ENCODE measurements at regions of chr1 and their contacts with region 1.

Region 1: DNA sequence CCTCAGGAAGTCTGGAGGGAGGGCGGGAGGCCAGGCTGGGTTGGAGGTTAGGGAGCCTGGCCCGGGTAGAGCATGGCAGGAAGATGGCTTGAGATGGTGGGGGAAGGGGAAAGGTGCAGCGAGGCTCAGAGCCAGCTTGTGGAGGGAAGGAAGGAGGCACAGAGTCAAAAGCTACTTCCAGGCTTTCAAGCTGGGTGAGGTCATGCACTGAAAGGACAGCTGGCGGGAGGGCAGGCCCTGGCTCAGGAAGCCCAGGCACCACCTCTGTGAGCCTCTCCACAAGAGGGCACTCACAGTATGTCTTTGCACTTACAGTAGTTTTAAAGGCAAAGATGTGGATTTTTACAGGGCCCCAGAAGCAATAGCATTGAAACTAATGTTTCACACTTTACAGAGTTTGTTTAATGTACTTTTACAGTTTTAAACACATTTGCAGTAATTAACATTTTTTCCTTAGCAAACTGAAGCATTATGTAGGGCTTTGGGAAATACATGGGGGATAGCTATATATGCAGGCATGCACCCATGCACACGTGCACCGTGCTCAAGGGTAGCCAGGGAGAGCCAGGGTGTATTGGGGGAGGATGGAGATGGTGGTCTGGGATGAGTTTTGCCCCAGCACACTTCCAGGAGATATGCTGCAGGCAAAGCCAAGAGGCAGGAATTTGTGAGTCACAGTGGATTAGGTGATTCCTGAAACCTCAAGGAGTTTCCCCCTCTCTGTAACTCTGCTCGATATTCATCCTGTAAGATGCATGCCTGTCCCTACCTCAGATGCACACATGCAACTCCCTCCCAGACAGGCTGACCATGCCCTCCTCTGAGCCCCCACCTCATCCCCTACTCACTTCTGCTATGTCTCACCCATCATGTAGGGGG is 6.1 kb upstream of the ADAM15 start:
- DNase-seq: peak in 8 of 9 experiments; percentile 42 to 80 (median 64)
- ATAC-seq: peak; percentile 94
- H3K4me3 ChIP-seq: no peak overlapping the region
- H3K4me3 Mint-ChIP-seq: no peak overlapping the region
- H3K27ac ChIP-seq: no peak overlapping the region
- H3K27ac Mint-ChIP-seq: no peak overlapping the region
- H3K4me1 ChIP-seq: no peaks in the 10 kb centered on the region
- H3K4me1 Mint-ChIP-seq: peaks cover 4% of the 10 kb centered on the region
- H3K27me3 ChIP-seq: no peaks in the 10 kb centered on the region
- H3K27me3 Mint-ChIP-seq: peaks cover 3% of the 10 kb centered on the region
- CTCF ChIP-seq: peak; percentile 64

Region 2: DNA sequence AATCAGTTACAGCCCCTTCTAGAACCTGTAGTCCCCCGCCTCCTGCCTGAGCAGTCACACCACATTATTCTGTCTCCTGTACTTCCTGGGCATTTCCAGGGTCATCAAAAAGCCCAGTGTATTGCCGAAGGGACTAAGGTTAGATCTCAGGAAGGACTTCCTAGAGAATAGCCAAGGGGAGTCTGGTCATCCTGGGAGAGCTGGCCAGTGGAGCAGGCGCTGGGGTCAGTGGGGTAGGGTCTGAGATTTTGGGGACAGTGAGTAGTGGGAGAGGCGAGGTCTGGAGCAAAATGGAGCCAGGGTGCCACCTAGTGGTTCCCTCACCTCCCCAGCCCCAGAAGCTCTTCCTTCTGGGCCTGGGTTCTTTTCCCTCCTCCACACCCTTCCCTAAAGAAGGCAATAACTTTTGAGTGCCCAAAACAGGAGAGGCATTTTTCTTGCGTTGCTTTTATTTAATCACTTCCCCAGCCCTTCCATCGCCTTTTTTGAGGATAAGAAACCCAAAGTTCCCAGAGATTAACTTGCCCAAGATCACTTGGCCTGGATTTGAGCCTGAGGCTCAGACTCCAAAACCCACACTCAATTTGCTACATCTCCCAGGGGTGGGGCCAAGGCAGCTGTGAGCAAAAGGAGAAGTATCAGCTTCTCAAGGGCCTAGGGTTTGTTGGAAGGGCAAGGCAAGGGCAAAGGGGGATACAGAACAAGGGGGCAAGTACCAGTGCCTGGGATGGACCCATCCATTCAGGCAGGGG is 101.2 kb before region 1 on chr1:
- CTCF ChIA-PET with region 1: no interaction called
- POLR2A ChIA-PET with region 1: no interaction called
- intact Hi-C with region 1: no loop called
- DNase-seq: peak in 4 of 9 experiments; percentile 40 to 67 (median 54)
- ATAC-seq: peak; percentile 29
- H3K4me3 ChIP-seq: no peak overlapping the region
- H3K4me3 Mint-ChIP-seq: no peak overlapping the region
- H3K27ac ChIP-seq: peak overlapping the region in 1 of 2 experiments; percentile 68
- H3K27ac Mint-ChIP-seq: peak overlapping the region; percentile 85
- H3K4me1 ChIP-seq: peaks cover 35% of the 10 kb centered on the region
- H3K4me1 Mint-ChIP-seq: peaks cover 51% of the 10 kb centered on the region
- H3K27me3 ChIP-seq: no peaks in the 10 kb centered on the region
- H3K27me3 Mint-ChIP-seq: no peaks in the 10 kb centered on the region
- CTCF ChIP-seq: peak; percentile 61

Region 3: DNA sequence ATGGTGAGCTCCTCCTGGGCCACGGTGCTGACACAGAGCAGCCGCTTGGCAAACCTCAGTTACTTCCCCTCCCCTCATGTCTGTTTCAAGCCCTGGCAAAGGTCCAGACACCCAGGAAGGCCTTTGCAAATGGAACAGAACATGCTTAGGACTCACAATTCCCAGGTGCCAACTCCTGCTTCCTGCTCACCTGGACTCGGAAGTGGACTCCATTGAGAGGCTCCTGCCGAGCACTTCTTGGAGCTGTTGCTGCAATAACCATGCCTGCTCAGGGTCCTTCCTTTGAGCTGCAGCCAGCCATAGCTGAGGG is 22.2 kb before region 1 on chr1:
- CTCF ChIA-PET with region 1: interaction called, 14 read pairs
- POLR2A ChIA-PET with region 1: no interaction called
- intact Hi-C with region 1: no loop called
- DNase-seq: no peak
- ATAC-seq: no peak
- H3K4me3 ChIP-seq: no peak overlapping the region
- H3K4me3 Mint-ChIP-seq: no peak overlapping the region
- H3K27ac ChIP-seq: no peak overlapping the region
- H3K27ac Mint-ChIP-seq: no peak overlapping the region
- H3K4me1 ChIP-seq: peaks cover 4% of the 10 kb centered on the region
- H3K4me1 Mint-ChIP-seq: peaks cover 2% of the 10 kb centered on the region
- H3K27me3 ChIP-seq: no peaks in the 10 kb centered on the region
- H3K27me3 Mint-ChIP-seq: peaks cover 2% of the 10 kb centered on the region
- CTCF ChIP-seq: no peak

Region 4: GRCh38 chr1:155078469-155079209 is 33.6 kb after region 1 on chr1 and contains the start of gene EFNA3:
- CTCF ChIA-PET with region 1: interaction called, 61 read pairs
- POLR2A ChIA-PET with region 1: no interaction called
- intact Hi-C with region 1: no loop called
- DNase-seq: peak in 8 of 9 experiments; percentile 41 to 76 (median 64)
- ATAC-seq: peak; percentile 43
- H3K4me3 ChIP-seq: peak within 1 kb of the TSS; percentile 29 to 37
- H3K4me3 Mint-ChIP-seq: peak within 1 kb of the TSS; percentile 69
- H3K27ac ChIP-seq: no peak within 1 kb of the TSS
- H3K27ac Mint-ChIP-seq: peak within 1 kb of the TSS; percentile 5
- H3K4me1 ChIP-seq: peaks cover 52% of the 10 kb centered on the region
- H3K4me1 Mint-ChIP-seq: peaks cover 36% of the 10 kb centered on the region
- H3K27me3 ChIP-seq: peaks cover 39 to 46% of the 10 kb centered on the region in 2 experiments
- H3K27me3 Mint-ChIP-seq: peaks cover 26% of the 10 kb centered on the region
- CTCF ChIP-seq: no peak
- total RNA-seq, gene EFNA3: 0.46 to 0.69 TPM

Region 5: DNA sequence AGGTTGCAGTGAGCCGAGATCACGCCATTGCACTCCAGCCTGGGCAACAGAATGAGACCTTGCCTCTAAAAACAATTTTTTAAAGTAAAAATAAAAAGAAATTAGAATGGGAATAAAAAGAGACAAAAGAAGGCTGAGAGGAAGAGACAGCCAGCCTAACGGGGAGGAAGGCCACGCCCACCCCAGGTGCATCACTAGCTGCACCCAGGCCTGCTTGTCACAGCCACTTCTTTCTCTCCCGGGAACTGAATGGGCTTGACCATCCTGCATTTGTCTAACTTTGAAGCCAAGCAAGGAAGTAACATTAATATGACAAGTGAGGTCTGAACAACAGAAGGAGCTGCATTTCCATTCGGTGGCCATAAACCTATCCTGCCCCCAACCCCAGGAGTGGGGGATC is 61.8 kb after region 1 on chr1:
- CTCF ChIA-PET with region 1: no interaction called
- POLR2A ChIA-PET with region 1: no interaction called
- intact Hi-C with region 1: no loop called
- DNase-seq: no peak
- ATAC-seq: no peak
- H3K4me3 ChIP-seq: no peak overlapping the region
- H3K4me3 Mint-ChIP-seq: no peak overlapping the region
- H3K27ac ChIP-seq: no peak overlapping the region
- H3K27ac Mint-ChIP-seq: no peak overlapping the region
- H3K4me1 ChIP-seq: no peaks in the 10 kb centered on the region
- H3K4me1 Mint-ChIP-seq: no peaks in the 10 kb centered on the region
- H3K27me3 ChIP-seq: no peaks in the 10 kb centered on the region
- H3K27me3 Mint-ChIP-seq: peaks cover 7% of the 10 kb centered on the region
- CTCF ChIP-seq: no peak